WTC11 (cell line): ENCODE measurements at regions of chr9 and their contacts with region 1.

Region 1: GRCh38 chr9:32251539-32251938 is 132.9 kb upstream of the ACO1 start:
- DNase-seq: peak; percentile 71
- ATAC-seq: peak; percentile 89
- H3K4me3 Mint-ChIP-seq: no peak overlapping the region
- H3K27ac Mint-ChIP-seq: no peak overlapping the region
- H3K4me1 Mint-ChIP-seq: no peaks in the 10 kb centered on the region
- H3K27me3 Mint-ChIP-seq: no peaks in the 10 kb centered on the region
- CTCF ChIP-seq: peak; percentile 44

Region 2: DNA sequence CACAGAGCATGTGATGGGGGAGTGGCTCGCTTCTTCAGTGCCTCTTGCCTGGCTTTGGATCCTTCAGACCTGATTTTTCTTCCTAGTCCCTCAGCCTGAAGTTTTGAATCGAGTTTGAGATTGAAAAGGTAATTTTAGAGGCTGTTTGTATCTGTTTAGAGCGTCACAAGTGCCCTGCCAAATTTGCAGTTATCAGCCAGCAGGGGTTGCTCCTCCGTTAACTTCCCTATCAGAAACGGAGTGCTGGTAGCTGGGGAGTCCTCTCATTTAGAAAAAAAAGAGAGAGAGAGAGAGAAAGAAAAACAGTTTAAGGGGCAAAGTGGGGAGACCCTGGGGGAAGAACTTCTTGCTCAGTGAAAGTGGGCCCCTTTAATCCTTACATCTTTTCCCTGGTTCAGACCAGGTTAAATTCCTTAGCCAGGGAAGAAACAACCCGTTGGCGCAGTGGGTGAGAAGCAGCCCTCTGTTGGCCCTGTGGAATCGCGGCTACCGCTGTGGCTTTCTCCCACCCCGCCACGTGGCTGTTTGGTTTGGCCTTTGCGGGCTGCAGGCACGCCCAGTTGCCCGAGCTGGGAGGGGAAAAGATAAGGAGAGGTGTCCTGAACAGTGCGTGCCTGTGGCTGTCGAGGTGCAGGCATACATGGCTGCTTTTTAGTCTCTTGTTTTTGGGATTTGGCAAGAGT is 443.8 kb before region 1 on chr9:
- CTCF ChIA-PET with region 1: interaction called, 11 read pairs
- POLR2A ChIA-PET with region 1: no interaction called
- DNase-seq: peak; percentile 60
- ATAC-seq: peak; percentile 92
- H3K4me3 Mint-ChIP-seq: peak overlapping the region; percentile 13; the same call in 1 of the 2 replicates
- H3K27ac Mint-ChIP-seq: no peak overlapping the region
- H3K4me1 Mint-ChIP-seq: peaks cover 12% of the 10 kb centered on the region
- H3K27me3 Mint-ChIP-seq: no peaks in the 10 kb centered on the region
- CTCF ChIP-seq: no peak

Region 3: GRCh38 chr9:31916591-31917241 is 334.8 kb before region 1 on chr9:
- CTCF ChIA-PET with region 1: interaction called, 10 read pairs
- POLR2A ChIA-PET with region 1: no interaction called
- DNase-seq: peak; percentile 20
- ATAC-seq: peak; percentile 94
- H3K4me3 Mint-ChIP-seq: no peak overlapping the region
- H3K27ac Mint-ChIP-seq: peak overlapping the region; percentile 1; the same call in 1 of the 2 replicates
- H3K4me1 Mint-ChIP-seq: peaks cover 26% of the 10 kb centered on the region
- H3K27me3 Mint-ChIP-seq: no peaks in the 10 kb centered on the region
- CTCF ChIP-seq: no peak

Region 4: GRCh38 chr9:32264170-32264862 is 12.8 kb after region 1 on chr9:
- CTCF ChIA-PET with region 1: interaction called, 23 read pairs
- POLR2A ChIA-PET with region 1: no interaction called
- DNase-seq: peak; percentile 38
- ATAC-seq: peak; percentile 100
- H3K4me3 Mint-ChIP-seq: no peak overlapping the region
- H3K27ac Mint-ChIP-seq: peak overlapping the region; percentile 68; the same call in 1 of the 2 replicates
- H3K4me1 Mint-ChIP-seq: peaks cover 13% of the 10 kb centered on the region
- H3K27me3 Mint-ChIP-seq: no peaks in the 10 kb centered on the region; the same call in 1 of the 2 replicates
- CTCF ChIP-seq: 0 out of 2 replicates have a peak, but pooled peaks have one; percentile 19